ENCODE measurements at regions of chr22 and their contacts with region 1.

Region 1: GRCh38 chr22:50627642-50628542 is at the start of gene ARSA:
- DNase-seq: peak; percentile 75 to 87
- H3K4me3 ChIP-seq: peak within 1 kb of the TSS; percentile 62 to 81
- H3K27ac ChIP-seq: peak within 1 kb of the TSS; percentile 66 to 82
- H3K4me1 ChIP-seq: peaks cover 0 to 18% (median 16%) of the 10 kb centered on the region in 4 donors
- H3K27me3 ChIP-seq: no peaks in the 10 kb centered on the region
- CTCF ChIP-seq: peak in 1 of 2 experiments; percentile 20

Region 2: DNA sequence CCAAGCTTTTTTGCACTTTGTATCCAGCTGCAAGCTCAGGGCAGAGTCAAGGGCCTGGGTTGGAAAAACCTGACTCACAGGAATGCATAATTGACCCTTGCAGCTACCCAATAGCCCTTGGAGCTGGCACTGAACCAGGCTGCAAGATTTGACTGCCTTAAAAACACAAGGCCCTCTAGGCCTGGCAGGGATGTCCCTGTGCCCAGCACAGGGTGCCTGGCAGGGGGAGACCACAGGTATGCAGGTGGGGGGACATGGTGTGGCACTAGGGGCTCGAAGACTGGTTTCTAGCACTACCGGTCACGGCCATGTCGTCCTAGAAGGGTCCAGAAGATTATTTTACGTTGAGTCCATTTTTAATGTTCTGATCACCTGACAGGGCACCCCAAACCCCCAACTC is 183.2 kb before region 1 on chr22:
- intact Hi-C with region 1: no loop called
- DNase-seq: no peak
- H3K4me3 ChIP-seq: no peak overlapping the region
- H3K27ac ChIP-seq: peak overlapping the region in 1 of 2 donors; percentile 34
- H3K4me1 ChIP-seq: peaks cover 0 to 17% (median 5%) of the 10 kb centered on the region in 4 donors
- H3K27me3 ChIP-seq: no peaks in the 10 kb centered on the region
- CTCF ChIP-seq: no peak

Region 3: DNA sequence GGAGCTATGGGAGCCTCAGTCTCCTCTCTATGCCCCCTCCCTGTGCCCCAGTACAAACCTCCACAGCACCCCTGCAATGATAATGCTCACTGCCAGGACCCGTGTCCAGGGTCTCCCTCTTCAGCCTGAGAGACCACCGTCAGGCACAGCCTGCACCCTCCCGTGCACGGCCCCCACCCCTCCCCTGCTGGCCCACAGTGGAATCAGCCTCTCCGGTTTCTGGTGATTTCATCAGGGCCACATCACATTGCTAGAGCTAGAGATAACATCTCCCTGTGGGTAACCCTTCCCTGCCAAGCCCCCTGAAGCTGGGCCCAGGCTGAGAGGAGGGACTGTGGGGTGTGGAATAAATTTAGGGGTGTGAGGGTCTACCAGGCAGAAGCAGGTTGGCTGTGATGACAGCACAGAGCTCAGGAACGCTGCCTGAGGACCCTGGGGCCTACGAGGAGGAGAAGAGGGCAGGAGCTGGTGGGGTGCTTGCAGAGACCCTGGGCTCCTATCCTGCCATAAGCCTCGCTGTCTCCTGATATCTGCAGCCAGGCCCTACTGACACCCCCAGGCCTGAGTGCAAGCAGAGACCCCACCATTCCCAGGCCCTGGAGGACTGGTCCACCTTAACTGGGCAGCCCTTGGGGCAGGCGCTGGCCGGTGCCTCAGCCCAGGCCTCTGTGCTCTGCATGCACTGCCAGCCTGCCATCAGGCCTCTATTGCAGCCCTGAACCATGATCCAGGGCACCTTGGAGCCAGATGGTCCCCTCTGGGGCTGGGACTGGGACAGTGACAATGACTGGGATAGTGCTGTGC is 82.2 kb before region 1 on chr22 and contains the start of gene KLHDC7B:
- intact Hi-C with region 1: no loop called
- DNase-seq: no peak
- H3K4me3 ChIP-seq: no peak within 1 kb of the TSS
- H3K27ac ChIP-seq: no peak within 1 kb of the TSS
- H3K4me1 ChIP-seq: peaks cover 0 to 33% (median 19%) of the 10 kb centered on the region in 4 donors
- H3K27me3 ChIP-seq: peaks cover 0 to 73% of the 10 kb centered on the region in 2 donors
- CTCF ChIP-seq: no peak

Region 4: DNA sequence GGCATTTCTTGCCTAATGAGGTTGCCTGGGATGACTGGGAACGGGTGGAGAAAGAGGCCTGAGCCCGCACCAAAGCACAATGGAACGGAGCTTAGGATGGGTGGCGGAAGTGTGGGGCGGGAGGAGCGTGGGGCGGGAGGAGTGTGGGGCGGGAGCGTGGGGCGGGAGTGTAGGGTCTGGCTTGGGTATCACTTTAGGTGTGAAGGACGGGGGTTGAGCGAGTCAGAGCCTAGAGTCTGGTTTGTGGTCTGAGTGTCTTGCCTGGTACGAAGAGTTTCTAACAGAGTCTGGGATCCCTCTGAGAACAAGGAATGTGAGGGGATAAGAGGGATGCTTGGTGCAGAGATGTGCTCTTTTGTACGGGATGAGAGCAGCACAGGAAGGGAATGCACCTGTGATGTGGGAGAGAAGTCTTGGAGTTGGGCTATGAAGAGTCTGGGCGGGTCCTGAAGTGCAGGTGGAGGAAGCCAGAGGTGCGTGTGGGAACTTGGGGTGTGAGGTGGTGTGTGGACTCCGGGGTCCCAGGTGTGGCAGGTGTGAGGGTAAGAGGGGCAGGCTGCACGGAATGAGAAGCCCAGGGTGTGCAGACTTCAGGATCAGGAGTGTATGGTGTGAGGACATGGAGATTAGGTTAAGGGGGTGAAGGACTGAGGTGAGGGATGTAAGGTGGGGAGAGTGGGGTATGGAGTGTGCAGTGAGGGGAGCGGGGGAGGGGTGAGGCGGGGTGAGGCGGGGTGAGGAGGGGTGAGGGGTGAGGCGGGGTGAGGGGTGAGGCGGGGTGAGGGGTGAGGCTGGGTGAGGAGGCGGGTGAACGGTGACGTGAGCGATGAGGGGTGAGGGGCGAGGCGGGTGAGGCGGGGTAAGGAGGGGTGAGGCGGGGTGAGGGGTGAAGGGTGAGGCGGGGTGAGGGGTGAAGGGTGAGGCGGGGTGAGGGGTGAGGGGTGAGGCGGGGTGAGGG is 66.2 kb before region 1 on chr22:
- intact Hi-C with region 1: no loop called
- DNase-seq: no peak
- H3K4me3 ChIP-seq: no peak overlapping the region
- H3K27ac ChIP-seq: no peak overlapping the region
- H3K4me1 ChIP-seq: peaks cover 0 to 11% (median 7%) of the 10 kb centered on the region in 4 donors
- H3K27me3 ChIP-seq: peaks cover 0 to 12% of the 10 kb centered on the region in 2 donors
- CTCF ChIP-seq: no peak

Region 5: DNA sequence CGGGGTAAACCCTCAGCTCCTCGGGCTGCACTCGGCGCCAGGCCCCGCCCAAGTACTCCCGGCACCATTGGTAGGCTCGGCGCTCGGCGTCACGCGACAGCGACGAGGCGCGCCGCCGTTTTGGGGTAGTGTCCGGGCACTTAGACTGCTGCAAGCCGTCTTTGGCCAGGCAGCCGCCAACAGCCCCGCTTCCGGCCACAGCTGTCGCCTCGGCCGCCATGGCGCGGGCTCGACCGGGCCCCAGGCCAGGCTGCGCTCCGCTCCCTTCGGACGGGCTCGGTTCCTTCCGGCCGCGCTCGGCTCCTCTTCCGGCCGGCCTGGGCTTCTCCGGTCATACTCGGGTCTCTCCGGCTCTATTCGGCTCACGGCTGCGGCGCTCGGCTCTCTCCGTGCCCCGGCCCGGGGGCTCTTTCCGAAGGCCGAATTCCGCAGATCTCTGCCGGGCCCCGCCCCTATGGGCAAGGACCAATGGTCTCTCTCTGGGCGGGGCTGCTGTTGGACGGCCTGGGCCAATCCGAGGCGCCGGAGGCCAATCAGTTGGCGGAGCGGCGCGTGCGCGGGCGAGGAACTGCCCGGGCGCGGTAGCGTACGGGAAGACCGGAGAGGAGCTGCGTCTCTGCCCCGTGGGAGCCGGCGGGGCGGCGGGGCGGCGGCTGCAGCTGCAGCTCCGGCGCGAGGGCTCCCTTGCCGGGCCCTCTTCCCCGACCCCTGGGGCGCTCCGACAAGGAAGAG is 45.2 kb before region 1 on chr22 and contains the start of gene CHKB:
- intact Hi-C with region 1: loop called (anchors 2 kb)
- DNase-seq: peak; percentile 97 to 99
- H3K4me3 ChIP-seq: peak within 1 kb of the TSS; percentile 60 to 80
- H3K27ac ChIP-seq: peak within 1 kb of the TSS; percentile 83 to 95
- H3K4me1 ChIP-seq: peaks cover 0 to 35% (median 29%) of the 10 kb centered on the region in 4 donors
- H3K27me3 ChIP-seq: peaks cover 0 to 15% of the 10 kb centered on the region in 2 donors
- CTCF ChIP-seq: no peak

Region 6: GRCh38 chr22:50684986-50685385 is 57.1 kb after region 1 on chr22:
- intact Hi-C with region 1: no loop called
- DNase-seq: no peak
- H3K4me3 ChIP-seq: no peak overlapping the region
- H3K27ac ChIP-seq: no peak overlapping the region
- H3K4me1 ChIP-seq: no peaks in the 10 kb centered on the region
- H3K27me3 ChIP-seq: peaks cover 0 to 37% of the 10 kb centered on the region in 2 donors
- CTCF ChIP-seq: no peak